ENCODE measurements at regions of chr21 and their contacts with region 1.

Region 1: GRCh38 chr21:43921979-43922945 is 57.2 kb downstream of the AGPAT3 start:
- DNase-seq: peak; percentile 69
- ATAC-seq: peak; percentile 61
- H3K4me3 ChIP-seq: 0 out of 2 replicates have a peak overlapping the region, but pooled peaks have one; percentile 6
- H3K27ac ChIP-seq: peak overlapping the region; percentile 92
- H3K4me1 ChIP-seq: peaks cover 27% of the 10 kb centered on the region
- H3K27me3 ChIP-seq: no peaks in the 10 kb centered on the region
- CTCF ChIP-seq: no peak
- EP300 ChIP-seq: peak; percentile 69 to 75; a peak in 3 of 4 replicates
- POLR2A ChIP-seq: peak; percentile 80
- RAD21 ChIP-seq: no peak

Region 2: DNA sequence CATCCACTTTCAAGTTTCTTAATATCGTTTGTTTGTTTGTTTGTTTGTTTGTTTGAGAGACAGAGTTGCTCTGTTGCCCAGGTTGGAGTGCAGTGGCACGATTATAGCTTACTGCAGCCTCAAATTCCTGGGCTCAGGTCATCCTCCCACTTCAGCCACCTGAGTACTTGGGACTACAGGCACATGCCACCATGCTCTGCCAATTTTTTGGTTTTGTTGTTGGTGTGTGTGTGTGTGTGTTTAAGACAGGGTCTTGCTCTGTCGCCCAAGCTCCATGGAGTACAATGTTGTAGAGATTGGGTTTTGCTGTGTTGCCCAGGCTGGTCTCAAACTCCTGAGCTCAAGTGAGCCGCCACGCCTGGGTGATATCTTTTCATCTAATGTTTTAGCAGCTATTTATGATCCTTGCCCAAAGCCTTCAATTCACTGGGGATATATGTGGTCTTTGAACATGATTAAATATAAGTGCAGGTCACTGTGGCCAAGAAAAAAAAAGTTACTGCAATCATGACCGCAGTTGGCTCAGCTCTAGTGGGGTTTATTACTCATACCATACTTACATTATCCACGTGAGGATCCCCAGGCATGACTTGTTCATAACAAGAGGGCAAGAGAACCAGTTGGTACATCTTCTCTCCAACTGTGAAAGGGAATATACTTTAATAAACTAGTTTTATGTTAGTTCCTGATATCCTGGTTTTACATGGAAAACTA is 254.9 kb before region 1 on chr21:
- CTCF ChIA-PET with region 1: no interaction called
- POLR2A ChIA-PET with region 1: no interaction called
- RAD21 ChIA-PET with region 1: no interaction called
- SMC1A ChIA-PET with region 1: no interaction called
- in situ Hi-C with region 1: no loop called
- intact Hi-C with region 1: loop called (anchors 5 kb)
- DNase-seq: no peak
- ATAC-seq: peak; percentile 87
- H3K4me3 ChIP-seq: no peak overlapping the region
- H3K27ac ChIP-seq: peak overlapping the region; percentile 20; the same call in 1 of the 2 replicates
- H3K4me1 ChIP-seq: peaks cover 15% of the 10 kb centered on the region
- H3K27me3 ChIP-seq: no peaks in the 10 kb centered on the region
- CTCF ChIP-seq: no peak
- EP300 ChIP-seq: no peak; a peak in 1 of 4 replicates
- POLR2A ChIP-seq: no peak
- RAD21 ChIP-seq: no peak

Region 3: GRCh38 chr21:43805275-43805800 is 116.9 kb before region 1 on chr21:
- CTCF ChIA-PET with region 1: interaction called, 6 read pairs
- POLR2A ChIA-PET with region 1: interaction called, 9 read pairs
- RAD21 ChIA-PET with region 1: interaction called, 11 read pairs
- SMC1A ChIA-PET with region 1: interaction called, 6 read pairs
- in situ Hi-C with region 1: loop called (anchors 5 kb)
- intact Hi-C with region 1: loop called (anchors 1 kb)
- DNase-seq: peak; percentile 98
- ATAC-seq: peak; percentile 94
- H3K4me3 ChIP-seq: no peak overlapping the region
- H3K27ac ChIP-seq: peak overlapping the region; percentile 98
- H3K4me1 ChIP-seq: peaks cover 49% of the 10 kb centered on the region
- H3K27me3 ChIP-seq: no peaks in the 10 kb centered on the region
- CTCF ChIP-seq: no peak
- EP300 ChIP-seq: peak; percentile 88 to 94; a peak in 3 of 4 replicates
- POLR2A ChIP-seq: no peak
- RAD21 ChIP-seq: no peak

Region 4: DNA sequence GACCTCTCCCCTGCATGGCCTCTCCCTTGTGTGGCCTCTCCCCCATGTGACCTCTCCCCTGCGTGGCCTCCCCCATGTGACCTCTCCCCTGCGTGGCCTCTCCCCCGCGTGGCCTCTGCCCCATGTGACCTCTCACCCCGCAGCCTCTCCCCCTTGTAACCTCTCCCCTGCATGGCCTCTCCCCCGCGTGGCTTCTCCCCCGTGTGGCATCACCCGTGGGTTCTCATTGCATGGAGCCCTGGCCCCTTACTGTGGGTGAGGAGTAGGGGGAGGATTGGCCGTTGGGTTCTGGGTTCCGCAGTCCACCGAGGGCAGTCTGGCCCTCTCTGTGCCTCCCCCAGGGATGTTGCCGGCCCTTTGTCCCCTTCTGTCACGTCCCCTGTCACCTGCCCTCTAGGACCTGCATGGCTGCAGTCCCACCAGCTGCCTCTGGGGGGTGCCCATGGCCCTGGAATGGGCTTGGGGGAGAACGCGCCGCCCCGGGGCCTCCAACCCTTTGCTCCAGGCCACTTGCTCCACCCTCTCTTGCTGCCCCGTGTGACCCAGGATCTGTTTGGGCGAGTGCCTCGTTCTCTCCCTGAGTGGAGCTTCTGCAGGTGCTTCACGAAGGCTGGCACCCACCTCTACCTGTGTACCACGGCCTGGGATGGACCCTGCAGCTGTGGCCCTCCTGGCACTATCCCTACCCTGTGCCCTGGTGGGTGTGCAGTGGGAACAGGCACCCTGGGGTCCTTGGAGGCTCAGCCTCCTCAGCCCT is 111.6 kb before region 1 on chr21:
- CTCF ChIA-PET with region 1: interaction called, 6 read pairs
- POLR2A ChIA-PET with region 1: interaction called, 9 read pairs
- RAD21 ChIA-PET with region 1: interaction called, 11 read pairs
- SMC1A ChIA-PET with region 1: interaction called, 6 read pairs
- in situ Hi-C with region 1: loop called (anchors 5 kb)
- intact Hi-C with region 1: loop called (anchors 1 kb)
- DNase-seq: peak; percentile 51
- ATAC-seq: peak; percentile 91
- H3K4me3 ChIP-seq: no peak overlapping the region
- H3K27ac ChIP-seq: peak overlapping the region; percentile 50
- H3K4me1 ChIP-seq: peaks cover 44% of the 10 kb centered on the region
- H3K27me3 ChIP-seq: no peaks in the 10 kb centered on the region
- CTCF ChIP-seq: peak; percentile 98 to 99 (median 99)
- EP300 ChIP-seq: no peak
- POLR2A ChIP-seq: no peak
- RAD21 ChIP-seq: peak; percentile 99

Region 5: DNA sequence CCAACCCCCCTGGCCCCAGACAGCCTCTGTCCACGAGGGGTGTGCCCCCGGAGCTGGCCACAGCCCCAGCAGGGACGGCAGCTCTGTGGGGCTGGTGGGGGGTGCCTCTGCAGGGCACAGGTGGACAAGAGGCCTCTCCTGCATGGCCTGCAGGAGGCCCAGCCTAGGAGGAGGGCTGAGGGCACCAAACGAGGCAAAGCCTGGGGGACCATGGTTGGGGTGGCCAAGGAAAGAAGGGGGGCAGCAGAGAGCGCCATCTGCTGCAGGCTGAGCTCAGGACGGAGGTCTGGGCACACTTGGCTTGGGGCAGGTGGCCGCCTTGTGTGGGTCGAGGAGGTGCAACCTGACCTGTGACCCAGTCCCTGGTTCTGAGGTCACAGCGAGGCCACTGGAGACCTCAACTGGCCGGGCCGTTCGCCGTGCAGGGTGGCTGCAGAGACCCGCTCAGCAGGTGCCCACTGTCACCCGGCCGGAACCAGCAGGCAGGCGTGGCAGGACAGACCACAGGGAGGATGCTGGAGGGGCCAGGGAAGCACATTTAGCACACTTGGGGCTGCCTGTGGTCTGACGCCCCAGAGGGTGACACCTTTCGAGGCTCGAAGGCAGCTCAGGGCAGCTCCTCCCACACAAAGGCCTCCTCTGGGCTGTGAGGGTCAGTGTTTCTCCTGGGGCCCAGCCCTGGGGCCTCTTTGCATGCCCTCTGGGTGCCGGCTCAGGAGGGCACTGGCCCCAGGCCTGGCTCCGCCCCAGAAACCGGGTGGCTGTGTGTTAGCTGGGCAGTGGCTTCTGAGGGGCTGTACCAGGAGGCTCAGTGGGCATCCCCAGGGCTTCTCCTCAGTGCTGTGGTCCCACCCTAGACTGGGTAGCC is 105.4 kb before region 1 on chr21:
- CTCF ChIA-PET with region 1: interaction called, 5 read pairs
- POLR2A ChIA-PET with region 1: interaction called, 4 read pairs
- RAD21 ChIA-PET with region 1: interaction called, 12 read pairs
- SMC1A ChIA-PET with region 1: interaction called, 4 read pairs
- in situ Hi-C with region 1: no loop called
- intact Hi-C with region 1: no loop called
- DNase-seq: no peak
- ATAC-seq: peak; percentile 32
- H3K4me3 ChIP-seq: no peak overlapping the region
- H3K27ac ChIP-seq: no peak overlapping the region
- H3K4me1 ChIP-seq: peaks cover 6% of the 10 kb centered on the region
- H3K27me3 ChIP-seq: no peaks in the 10 kb centered on the region
- CTCF ChIP-seq: peak in 2 of 3 experiments; percentile 11 to 22; a peak in 3 of 6 replicates
- EP300 ChIP-seq: no peak
- POLR2A ChIP-seq: no peak
- RAD21 ChIP-seq: no peak

Region 6: DNA sequence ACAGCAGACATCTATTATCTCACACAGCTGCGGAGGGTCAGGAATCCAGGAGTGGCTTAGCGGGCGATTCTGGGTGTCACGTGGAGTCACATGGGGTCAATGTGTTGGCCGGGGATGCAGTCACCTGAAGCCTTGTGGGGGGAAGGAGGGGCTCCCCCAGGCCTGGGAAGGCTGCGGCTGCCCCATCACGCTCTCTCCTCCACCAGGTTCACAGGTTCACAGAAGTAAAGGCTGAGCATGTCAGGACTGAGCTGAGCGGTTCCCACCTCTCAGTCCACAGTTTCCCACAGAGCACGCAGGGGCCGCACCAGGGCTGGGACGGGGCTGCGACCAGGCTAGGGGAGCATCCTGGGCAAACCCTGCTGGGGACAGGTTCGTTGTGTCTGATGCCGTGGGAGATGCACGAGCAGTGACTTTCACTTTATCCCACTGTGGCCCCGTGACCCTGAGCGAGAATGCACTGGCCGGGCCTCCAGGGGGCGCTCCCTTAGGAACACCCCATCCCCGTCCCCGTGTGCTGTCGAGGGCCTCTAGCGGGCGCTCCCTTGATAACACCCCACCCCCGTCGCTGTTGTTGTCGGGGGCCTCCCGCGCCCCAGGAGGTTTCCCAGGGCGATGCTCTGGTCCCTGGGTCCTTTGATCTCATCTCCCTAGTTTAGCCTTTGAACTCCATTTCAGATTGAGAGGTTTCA is 16.6 kb after region 1 on chr21:
- CTCF ChIA-PET with region 1: interaction called, 24 read pairs
- POLR2A ChIA-PET with region 1: interaction called, 31 read pairs
- RAD21 ChIA-PET with region 1: interaction called, 24 read pairs
- SMC1A ChIA-PET with region 1: interaction called, 34 read pairs
- in situ Hi-C with region 1: no loop called
- intact Hi-C with region 1: loop called (anchors 1 kb)
- DNase-seq: peak; percentile 84
- ATAC-seq: peak; percentile 94
- H3K4me3 ChIP-seq: peak overlapping the region; percentile 70
- H3K27ac ChIP-seq: peak overlapping the region; percentile 79
- H3K4me1 ChIP-seq: peaks cover 26% of the 10 kb centered on the region
- H3K27me3 ChIP-seq: no peaks in the 10 kb centered on the region
- CTCF ChIP-seq: peak; percentile 100; a peak in 5 of 6 replicates
- EP300 ChIP-seq: peak; percentile 70 to 76; a peak in 3 of 4 replicates
- POLR2A ChIP-seq: peak; percentile 71
- RAD21 ChIP-seq: peak; percentile 95

Region 7: DNA sequence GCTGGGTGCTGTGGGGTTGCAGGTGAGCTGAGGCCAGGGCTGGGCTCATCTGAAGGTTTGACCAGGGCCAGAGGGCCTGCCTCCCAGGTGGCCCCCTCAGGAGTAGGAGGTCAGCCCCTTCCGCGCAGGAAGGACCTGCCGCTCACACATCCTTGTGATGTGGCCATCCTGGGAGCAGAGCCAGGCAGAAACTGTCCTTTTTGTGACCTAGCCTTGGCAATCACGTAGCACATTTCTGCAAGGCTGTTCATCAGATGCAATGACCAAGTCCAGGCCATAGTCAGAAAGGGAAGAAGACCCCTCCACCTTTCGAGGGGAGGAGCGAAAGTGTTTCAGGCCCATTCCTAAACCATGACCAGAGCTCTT is 34.4 kb after region 1 on chr21:
- CTCF ChIA-PET with region 1: no interaction called
- POLR2A ChIA-PET with region 1: interaction called, 4 read pairs
- RAD21 ChIA-PET with region 1: interaction called, 3 read pairs
- SMC1A ChIA-PET with region 1: no interaction called
- in situ Hi-C with region 1: no loop called
- intact Hi-C with region 1: loop called (anchors 1 kb)
- DNase-seq: no peak
- ATAC-seq: no peak
- H3K4me3 ChIP-seq: no peak overlapping the region
- H3K27ac ChIP-seq: peak overlapping the region; percentile 41
- H3K4me1 ChIP-seq: peaks cover 32% of the 10 kb centered on the region
- H3K27me3 ChIP-seq: no peaks in the 10 kb centered on the region
- CTCF ChIP-seq: no peak
- EP300 ChIP-seq: no peak
- POLR2A ChIP-seq: no peak
- RAD21 ChIP-seq: no peak

Measured in GM12878 (cell line).